Common myeloid progenitor, CD34-positive (primary cell): ENCODE measurements at regions of chr7 and their contacts with region 1.

Region 1: DNA sequence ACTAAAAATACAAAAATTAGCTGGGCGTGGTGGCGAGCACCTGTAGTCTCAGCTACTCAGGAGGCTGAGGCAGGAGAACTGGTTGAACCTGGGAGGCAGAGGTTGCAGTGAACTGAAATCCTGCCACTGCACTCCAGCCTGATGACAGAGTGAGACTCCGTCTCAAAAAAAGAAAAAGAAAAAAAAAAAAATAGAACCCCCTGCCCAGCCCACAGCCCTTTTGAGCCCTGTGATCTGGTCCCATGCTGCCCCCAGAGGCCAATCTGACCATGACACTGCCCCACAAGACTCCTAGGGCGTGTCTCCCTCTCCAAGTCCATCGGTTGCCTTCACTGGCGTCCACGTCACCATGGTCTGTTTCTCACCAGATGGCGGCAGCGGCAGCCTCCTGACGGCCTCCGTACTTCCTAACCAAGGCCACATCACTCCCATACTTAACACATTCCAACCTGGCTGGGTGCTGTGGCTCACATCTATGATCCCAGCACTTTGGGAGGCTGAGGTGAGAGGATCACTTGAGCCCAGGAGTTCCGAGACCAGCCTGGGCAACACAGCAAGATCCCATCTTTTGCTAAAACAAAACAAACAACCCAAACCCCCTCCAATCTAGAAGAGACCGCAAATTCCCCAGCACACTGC is 18.0 kb downstream of the STX1A start:
- DNase-seq: peak in 2 of 3 donors; percentile 53 to 57
- H3K4me3 ChIP-seq: no peak overlapping the region
- H3K27ac ChIP-seq: no peak overlapping the region
- H3K4me1 ChIP-seq: peaks cover 0 to 10% (median 3%) of the 10 kb centered on the region in 4 experiments
- H3K27me3 ChIP-seq: peaks cover 0 to 65% (median 30%) of the 10 kb centered on the region in 5 experiments

Region 2: GRCh38 chr7:73635428-73636200 is 65.9 kb before region 1 on chr7:
- CTCF ChIA-PET with region 1: no interaction called
- POLR2A ChIA-PET with region 1: no interaction called
- DNase-seq: no peak
- H3K4me3 ChIP-seq: no peak overlapping the region
- H3K27ac ChIP-seq: no peak overlapping the region
- H3K4me1 ChIP-seq: peaks cover 0 to 6% (median 0%) of the 10 kb centered on the region in 4 experiments
- H3K27me3 ChIP-seq: peaks cover 0 to 50% (median 8%) of the 10 kb centered on the region in 5 experiments

Region 3: GRCh38 chr7:73690646-73691045 is 10.8 kb before region 1 on chr7:
- CTCF ChIA-PET with region 1: interaction called, 12 read pairs
- POLR2A ChIA-PET with region 1: interaction called, 3 read pairs
- DNase-seq: no peak
- H3K4me3 ChIP-seq: no peak overlapping the region
- H3K27ac ChIP-seq: no peak overlapping the region
- H3K4me1 ChIP-seq: no peaks in the 10 kb centered on the region
- H3K27me3 ChIP-seq: no peaks in the 10 kb centered on the region

Region 4: GRCh38 chr7:73715648-73716317 is 14.3 kb after region 1 on chr7:
- CTCF ChIA-PET with region 1: interaction called, 12 read pairs
- POLR2A ChIA-PET with region 1: interaction called, 3 read pairs
- DNase-seq: peak; percentile 69 to 91 (median 85)
- H3K4me3 ChIP-seq: no peak overlapping the region
- H3K27ac ChIP-seq: no peak overlapping the region
- H3K4me1 ChIP-seq: peaks cover 0 to 46% (median 42%) of the 10 kb centered on the region in 4 experiments
- H3K27me3 ChIP-seq: peaks cover 0 to 89% (median 39%) of the 10 kb centered on the region in 5 experiments

Region 5: DNA sequence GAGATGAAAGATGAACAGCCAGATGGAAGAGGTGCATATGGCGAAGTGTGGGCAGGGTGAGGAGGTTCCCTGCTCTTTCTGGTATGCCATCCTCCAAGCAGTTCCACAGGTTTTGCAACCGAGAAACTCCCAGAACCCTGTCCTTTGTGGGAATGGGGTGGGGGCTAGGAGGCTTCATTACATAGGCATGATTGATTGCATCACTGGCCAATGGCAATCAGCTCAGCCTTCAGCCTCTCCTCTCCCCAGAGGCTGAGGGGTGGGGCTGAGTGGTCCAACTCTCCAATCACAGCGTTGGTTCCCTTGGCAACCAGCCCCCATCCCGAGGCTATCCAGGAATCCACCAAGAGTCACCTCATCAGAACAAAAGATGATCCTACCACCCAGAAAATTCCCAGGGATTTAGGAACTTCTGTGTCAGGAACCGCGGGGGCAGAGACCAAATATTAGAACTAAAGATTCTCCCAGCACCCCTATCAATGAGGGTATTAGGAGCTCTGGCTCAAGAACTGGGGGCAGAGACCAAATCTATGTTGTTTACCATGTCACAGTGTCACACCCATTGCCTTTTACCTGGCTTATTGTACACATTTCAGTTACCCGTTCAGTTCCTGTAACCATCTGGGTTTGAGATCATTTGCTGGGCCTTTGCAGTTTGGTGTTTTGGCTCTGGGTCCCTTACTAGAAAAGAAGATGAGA is 91.3 kb after region 1 on chr7:
- CTCF ChIA-PET with region 1: no interaction called
- POLR2A ChIA-PET with region 1: no interaction called
- DNase-seq: no peak
- H3K4me3 ChIP-seq: no peak overlapping the region
- H3K27ac ChIP-seq: no peak overlapping the region
- H3K4me1 ChIP-seq: peaks cover 0 to 15% (median 0%) of the 10 kb centered on the region in 4 experiments
- H3K27me3 ChIP-seq: peaks cover 0 to 2% (median 0%) of the 10 kb centered on the region in 5 experiments

Region 6: DNA sequence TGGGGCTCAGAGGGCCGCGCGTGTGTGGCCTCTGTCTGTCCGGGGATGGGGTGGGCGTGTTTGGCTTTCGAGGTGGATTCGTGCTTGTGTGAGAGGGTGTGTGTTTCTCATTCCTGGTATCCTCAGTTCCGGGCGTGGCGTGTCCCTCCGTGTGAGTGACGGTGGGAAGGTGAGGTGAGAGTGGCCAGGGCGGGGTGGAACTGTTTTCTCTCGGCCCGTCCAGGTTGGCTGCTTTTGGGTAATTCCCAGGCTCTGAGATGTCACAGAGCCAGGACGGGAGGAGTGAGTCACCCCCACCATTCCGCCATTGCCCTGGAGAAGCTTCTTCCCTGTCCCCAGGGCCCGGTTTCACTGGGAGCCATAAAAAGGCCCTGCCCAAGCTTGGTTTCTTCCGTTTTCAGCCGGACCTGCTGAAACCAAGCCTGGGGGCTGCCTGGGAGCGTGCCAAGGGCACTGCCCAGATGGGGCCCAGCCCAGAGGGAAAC is 108.0 kb after region 1 on chr7:
- CTCF ChIA-PET with region 1: no interaction called
- POLR2A ChIA-PET with region 1: no interaction called
- DNase-seq: no peak
- H3K4me3 ChIP-seq: no peak overlapping the region
- H3K27ac ChIP-seq: no peak overlapping the region
- H3K4me1 ChIP-seq: no peaks in the 10 kb centered on the region
- H3K27me3 ChIP-seq: peaks cover 0 to 4% (median 0%) of the 10 kb centered on the region in 5 experiments

Region 7: DNA sequence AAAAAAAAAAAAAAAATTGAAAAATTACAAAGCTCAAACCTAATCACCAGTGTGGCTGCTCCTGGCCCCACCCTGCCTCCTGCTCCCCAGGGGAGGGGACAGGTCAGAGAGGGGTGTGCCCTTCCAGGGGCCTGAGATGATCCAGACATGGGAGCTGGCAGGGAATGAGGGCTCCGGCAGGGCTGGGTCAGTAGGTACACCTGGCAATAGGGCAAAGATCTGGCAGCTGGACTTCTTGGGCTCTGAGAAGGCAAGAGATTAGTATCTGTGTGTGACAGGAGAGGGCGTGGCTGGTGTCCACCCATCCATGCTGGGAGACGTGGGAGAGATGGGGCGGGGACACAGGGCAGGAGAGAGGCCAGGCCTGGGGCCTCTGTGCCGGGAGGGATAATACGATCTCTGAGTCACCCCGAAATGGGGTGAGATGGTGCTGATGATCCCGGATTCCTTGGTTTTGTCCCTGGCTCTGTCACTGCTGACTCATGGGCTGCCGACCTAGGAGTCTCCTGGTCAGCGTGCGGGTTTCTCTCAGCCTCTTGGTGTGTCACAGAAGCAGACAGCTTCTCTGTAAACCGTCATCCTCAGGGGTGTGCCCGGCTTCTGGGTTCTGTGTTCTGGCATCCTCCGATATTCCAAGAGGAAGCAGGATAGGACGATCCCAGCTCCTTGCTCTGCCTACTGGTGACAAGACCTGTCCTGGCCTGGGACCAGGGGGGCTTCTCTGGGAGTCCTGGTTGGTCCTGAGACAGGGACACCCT is 121.0 kb after region 1 on chr7:
- CTCF ChIA-PET with region 1: no interaction called
- POLR2A ChIA-PET with region 1: no interaction called
- DNase-seq: no peak
- H3K4me3 ChIP-seq: no peak overlapping the region
- H3K27ac ChIP-seq: no peak overlapping the region
- H3K4me1 ChIP-seq: peaks cover 5 to 19% (median 18%) of the 10 kb centered on the region in 4 experiments
- H3K27me3 ChIP-seq: peaks cover 0 to 3% (median 2%) of the 10 kb centered on the region in 5 experiments